CD4-positive, alpha-beta memory T cell (primary cell): ENCODE measurements at regions of chrX and their contacts with region 1.

Region 1: DNA sequence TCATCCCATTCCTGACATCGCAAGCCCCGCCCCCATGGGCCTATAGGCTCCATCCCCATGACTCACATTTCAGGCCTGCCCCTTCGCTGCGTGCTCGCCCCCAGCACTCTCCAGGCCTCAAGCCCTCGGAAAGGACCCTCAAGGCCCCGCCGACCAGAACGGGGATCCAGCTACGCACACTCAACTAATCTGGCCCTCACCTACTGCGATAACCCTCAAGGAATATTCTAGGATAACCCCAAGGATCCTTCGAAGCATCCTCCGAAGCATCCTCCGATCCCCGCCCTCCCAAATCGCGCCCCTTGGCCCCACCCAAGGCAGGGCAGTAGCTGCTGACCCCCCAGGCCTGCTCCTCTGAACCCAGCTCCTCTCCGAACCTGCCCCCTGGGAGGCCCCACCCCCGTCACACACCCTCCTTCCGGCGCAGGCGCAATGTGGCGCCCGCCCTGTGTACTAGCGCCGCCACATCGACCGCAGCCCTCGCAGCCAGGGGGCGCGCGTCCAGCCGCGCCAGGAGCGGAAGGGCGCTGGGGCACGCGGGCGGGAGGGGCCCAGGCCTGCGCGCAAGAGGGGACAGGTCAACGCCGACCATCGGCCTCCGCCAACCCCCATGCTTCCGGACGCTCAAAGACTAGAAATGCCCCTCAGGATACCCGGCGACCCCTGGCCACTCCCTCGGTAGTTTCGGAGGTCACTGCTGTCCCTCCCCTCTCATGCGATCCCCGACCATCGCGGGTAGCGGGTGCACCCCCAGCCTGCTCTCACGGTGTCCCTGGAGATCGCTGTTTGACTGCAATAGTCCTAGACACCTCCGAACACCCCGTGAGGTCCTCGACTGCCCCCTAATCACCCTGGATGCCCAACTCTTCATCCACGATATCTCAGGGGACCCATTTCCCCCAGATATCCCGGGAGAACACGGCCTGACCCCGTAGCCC is 6.4 kb upstream of the MAGIX start:
- DNase-seq: peak; percentile 85 to 86 (median 85)
- H3K4me3 ChIP-seq: peak overlapping the region; percentile 29 to 56
- H3K4me3 Mint-ChIP-seq: peak overlapping the region; percentile 91 to 97 (median 93)
- H3K27ac ChIP-seq: peak overlapping the region; percentile 86
- H3K27ac Mint-ChIP-seq: peak overlapping the region; percentile 95 to 99 (median 97)
- H3K4me1 ChIP-seq: peaks cover 8% of the 10 kb centered on the region
- H3K4me1 Mint-ChIP-seq: peaks cover 9 to 23% (median 12%) of the 10 kb centered on the region in 4 donors
- H3K27me3 ChIP-seq: no peaks in the 10 kb centered on the region
- H3K27me3 Mint-ChIP-seq: no peaks in the 10 kb centered on the region

Region 2: DNA sequence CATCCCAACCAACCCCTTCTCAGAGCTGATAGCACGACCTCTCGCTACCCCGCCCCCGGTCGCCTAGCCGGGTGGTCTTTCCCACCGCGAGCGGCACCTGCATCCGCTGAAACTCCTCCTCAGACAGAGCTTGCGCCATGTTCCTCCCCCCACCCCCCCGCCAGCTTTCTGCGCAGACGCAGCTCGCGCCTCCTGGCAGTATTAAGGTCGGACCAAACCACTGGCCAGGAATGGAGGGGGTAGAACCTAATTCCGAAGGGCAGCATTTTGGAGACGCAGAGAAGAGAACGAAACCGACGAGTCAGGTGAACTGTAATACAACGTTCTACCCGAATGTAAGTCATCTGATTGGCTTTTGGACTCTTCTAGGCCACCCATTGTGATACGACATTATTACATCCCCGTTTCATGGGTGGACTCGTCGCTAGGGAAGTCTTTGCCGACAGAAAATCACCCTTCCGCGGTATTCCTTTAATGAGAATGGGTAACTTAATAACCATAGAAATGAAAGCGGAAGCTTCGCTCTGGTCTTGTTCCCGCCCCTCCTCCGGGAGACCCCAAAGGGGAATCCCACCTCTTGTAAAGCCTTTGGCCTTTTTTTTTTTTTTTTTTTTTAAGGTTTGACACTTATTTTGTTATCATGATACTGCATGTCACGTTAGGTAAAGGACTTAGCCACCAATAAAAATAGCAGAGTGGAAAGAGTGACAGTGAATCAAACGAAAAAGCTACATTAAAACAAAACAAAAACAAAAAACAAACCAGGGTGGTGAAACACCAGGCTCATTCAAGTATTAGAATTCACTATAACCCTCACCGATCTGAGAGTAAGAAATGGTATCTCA is 153.9 kb before region 1 on chrX and contains the start of gene GRIPAP1:
- CTCF ChIA-PET with region 1: no interaction called
- POLR2A ChIA-PET with region 1: interaction called, 6 read pairs
- intact Hi-C with region 1: loop called (anchors 5 kb)
- DNase-seq: peak; percentile 82 to 94 (median 86)
- H3K4me3 ChIP-seq: peak within 1 kb of the TSS; percentile 79 to 86
- H3K4me3 Mint-ChIP-seq: peak within 1 kb of the TSS; percentile 91 to 99 (median 97)
- H3K27ac ChIP-seq: peak within 1 kb of the TSS; percentile 97
- H3K27ac Mint-ChIP-seq: peak within 1 kb of the TSS; percentile 93 to 99 (median 98)
- H3K4me1 ChIP-seq: peaks cover 27% of the 10 kb centered on the region
- H3K4me1 Mint-ChIP-seq: peaks cover 17 to 36% (median 27%) of the 10 kb centered on the region in 4 donors
- H3K27me3 ChIP-seq: no peaks in the 10 kb centered on the region
- H3K27me3 Mint-ChIP-seq: no peaks in the 10 kb centered on the region
- total RNA-seq, gene GRIPAP1: 99.6 to 111 TPM

Region 3: GRCh38 chrX:49079489-49080428 is 76.4 kb before region 1 on chrX and contains the start of gene WDR45:
- CTCF ChIA-PET with region 1: interaction called, 3 read pairs
- POLR2A ChIA-PET with region 1: interaction called, 13 read pairs
- intact Hi-C with region 1: loop called (anchors 10 kb)
- DNase-seq: peak; percentile 64 to 85 (median 71)
- H3K4me3 ChIP-seq: peak within 1 kb of the TSS; percentile 47 to 80
- H3K4me3 Mint-ChIP-seq: peak within 1 kb of the TSS; percentile 89 to 97 (median 96)
- H3K27ac ChIP-seq: peak within 1 kb of the TSS; percentile 96
- H3K27ac Mint-ChIP-seq: peak within 1 kb of the TSS; percentile 97 to 99 (median 99)
- H3K4me1 ChIP-seq: peaks cover 8% of the 10 kb centered on the region
- H3K4me1 Mint-ChIP-seq: peaks cover 4 to 15% (median 10%) of the 10 kb centered on the region in 4 donors
- H3K27me3 ChIP-seq: no peaks in the 10 kb centered on the region
- H3K27me3 Mint-ChIP-seq: no peaks in the 10 kb centered on the region
- total RNA-seq, gene WDR45: 102 to 126 TPM

Region 4: GRCh38 chrX:49137492-49137891 is 18.7 kb before region 1 on chrX:
- CTCF ChIA-PET with region 1: interaction called, 12 read pairs
- POLR2A ChIA-PET with region 1: interaction called, 4 read pairs
- intact Hi-C with region 1: no loop called
- DNase-seq: no peak
- H3K4me3 ChIP-seq: no peak overlapping the region
- H3K4me3 Mint-ChIP-seq: no peak overlapping the region
- H3K27ac ChIP-seq: no peak overlapping the region
- H3K27ac Mint-ChIP-seq: no peak overlapping the region
- H3K4me1 ChIP-seq: no peaks in the 10 kb centered on the region
- H3K4me1 Mint-ChIP-seq: peaks cover 0 to 2% (median 0%) of the 10 kb centered on the region in 4 donors
- H3K27me3 ChIP-seq: no peaks in the 10 kb centered on the region
- H3K27me3 Mint-ChIP-seq: no peaks in the 10 kb centered on the region

Region 5: DNA sequence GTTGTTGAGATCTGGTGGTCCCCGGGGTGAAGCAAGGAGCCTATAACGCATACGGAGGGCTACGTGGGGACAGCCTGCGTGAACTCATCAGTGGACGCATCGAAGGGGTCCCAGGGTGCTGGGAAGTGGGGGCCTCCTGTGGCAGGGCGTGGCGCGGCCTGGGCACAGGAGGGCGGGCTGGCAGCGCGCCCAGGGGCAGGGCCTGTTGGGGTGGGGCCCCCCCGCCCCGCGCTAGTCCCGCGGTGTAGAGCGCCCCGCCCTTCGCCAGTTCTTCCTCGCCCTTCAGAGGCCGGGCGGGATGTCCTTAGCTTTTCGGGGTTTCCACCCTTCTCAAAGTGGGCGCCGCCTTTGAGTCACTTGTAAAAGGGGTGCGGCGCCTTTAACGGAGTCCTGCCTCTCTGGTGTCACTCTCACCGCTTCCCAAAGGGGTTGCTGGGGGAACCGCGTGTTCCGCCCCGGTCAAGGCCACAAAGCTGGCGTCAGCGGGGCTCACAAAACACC is 16.2 kb after region 1 on chrX:
- CTCF ChIA-PET with region 1: interaction called, 31 read pairs
- POLR2A ChIA-PET with region 1: interaction called, 37 read pairs
- intact Hi-C with region 1: no loop called
- DNase-seq: peak; percentile 49 to 75 (median 58)
- H3K4me3 ChIP-seq: peak overlapping the region; percentile 52 to 54
- H3K4me3 Mint-ChIP-seq: peak overlapping the region; percentile 84 to 91 (median 88)
- H3K27ac ChIP-seq: peak overlapping the region; percentile 76
- H3K27ac Mint-ChIP-seq: peak overlapping the region; percentile 85 to 93 (median 86)
- H3K4me1 ChIP-seq: peaks cover 27% of the 10 kb centered on the region
- H3K4me1 Mint-ChIP-seq: peaks cover 14 to 42% (median 23%) of the 10 kb centered on the region in 4 donors
- H3K27me3 ChIP-seq: no peaks in the 10 kb centered on the region
- H3K27me3 Mint-ChIP-seq: no peaks in the 10 kb centered on the region